ENCODE measurements at regions of chr15 and their contacts with region 1.

Region 1: DNA sequence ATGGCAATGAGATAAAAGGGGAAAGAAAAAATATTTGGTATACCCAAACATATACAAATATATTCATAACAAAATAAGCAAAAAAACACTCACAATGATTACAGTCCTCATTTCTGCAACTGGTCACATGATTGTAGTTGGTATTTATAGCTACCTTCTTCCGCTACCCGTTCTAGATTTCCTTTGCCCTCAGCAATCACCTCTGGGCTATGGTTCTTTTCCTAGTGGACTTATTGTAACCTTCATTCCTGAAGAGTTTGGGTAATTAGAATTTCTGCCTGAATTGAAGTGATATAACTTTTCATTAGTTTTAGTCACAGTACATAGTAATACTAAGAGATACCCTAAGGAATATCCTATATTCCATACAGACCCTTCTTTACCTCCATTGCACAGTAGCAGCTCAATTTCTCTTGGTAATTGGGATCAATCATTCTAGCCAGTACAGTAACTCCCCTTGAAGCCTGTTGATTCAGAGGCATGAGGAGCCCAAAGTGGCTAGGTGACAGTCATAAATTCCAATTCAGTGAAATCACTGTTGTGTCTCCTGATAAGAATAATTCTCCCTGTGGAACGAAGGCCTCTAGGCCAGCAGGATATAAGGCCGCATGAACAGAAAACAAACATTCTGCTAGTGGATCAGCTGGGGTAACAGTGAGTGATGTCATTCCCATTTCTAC is 696.1 kb downstream of the NR2F2 start:
- DNase-seq: no peak
- ATAC-seq: no peak
- H3K4me3 ChIP-seq: no peak overlapping the region
- H3K27ac ChIP-seq: no peak overlapping the region
- H3K4me1 ChIP-seq: no peaks in the 10 kb centered on the region
- H3K27me3 ChIP-seq: no peaks in the 10 kb centered on the region
- CTCF ChIP-seq: no peak

Region 2: GRCh38 chr15:96974761-96975160 is 51.8 kb before region 1 on chr15:
- intact Hi-C with region 1: no loop called
- DNase-seq: no peak
- ATAC-seq: no peak
- H3K4me3 ChIP-seq: no peak overlapping the region
- H3K27ac ChIP-seq: no peak overlapping the region
- H3K4me1 ChIP-seq: no peaks in the 10 kb centered on the region
- H3K27me3 ChIP-seq: peaks cover 0 to 13% (median 5%) of the 10 kb centered on the region in 7 donors
- CTCF ChIP-seq: no peak

Region 3: DNA sequence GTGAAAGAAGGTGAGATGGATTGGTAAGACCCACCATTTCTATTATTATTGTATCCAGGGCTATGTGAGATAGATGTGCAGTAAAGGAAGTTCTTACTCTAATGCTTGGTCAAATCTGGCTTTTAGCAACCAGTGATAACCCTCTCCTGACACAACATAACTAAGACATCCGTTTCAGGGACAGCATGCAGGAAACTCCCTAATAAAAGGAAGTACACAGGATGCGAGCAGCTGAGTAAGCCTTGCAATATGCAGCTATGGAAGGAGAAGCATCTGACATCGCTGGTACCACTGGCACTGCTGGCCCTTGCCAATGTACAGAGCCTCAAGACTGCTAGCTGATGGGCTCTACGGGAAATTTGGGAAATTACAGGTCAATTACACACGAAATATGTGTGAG is 33.8 kb before region 1 on chr15:
- intact Hi-C with region 1: loop called in 1 of 10 experiments (anchors 2 kb)
- DNase-seq: no peak
- ATAC-seq: no peak
- H3K4me3 ChIP-seq: no peak overlapping the region
- H3K27ac ChIP-seq: no peak overlapping the region
- H3K4me1 ChIP-seq: no peaks in the 10 kb centered on the region
- H3K27me3 ChIP-seq: no peaks in the 10 kb centered on the region
- CTCF ChIP-seq: no peak